Ascending aorta (tissue), 2 donors: ENCODE measurements at regions of chr2 and their contacts with region 1.

Region 1: GRCh38 chr2:219206442-219207253 is at the start of gene ZFAND2B:
- DNase-seq: peak; percentile 83 to 97
- H3K4me3 ChIP-seq: peak within 1 kb of the TSS; percentile 86 to 90
- H3K27ac ChIP-seq: peak within 1 kb of the TSS; percentile 91 to 99
- H3K4me1 ChIP-seq: peaks cover 0 to 6% of the 10 kb centered on the region in 2 donors
- H3K27me3 ChIP-seq: no peaks in the 10 kb centered on the region
- CTCF ChIP-seq: peak; percentile 9 to 34 (median 17)
- total RNA-seq, gene ZFAND2B: 225 TPM

Region 2: DNA sequence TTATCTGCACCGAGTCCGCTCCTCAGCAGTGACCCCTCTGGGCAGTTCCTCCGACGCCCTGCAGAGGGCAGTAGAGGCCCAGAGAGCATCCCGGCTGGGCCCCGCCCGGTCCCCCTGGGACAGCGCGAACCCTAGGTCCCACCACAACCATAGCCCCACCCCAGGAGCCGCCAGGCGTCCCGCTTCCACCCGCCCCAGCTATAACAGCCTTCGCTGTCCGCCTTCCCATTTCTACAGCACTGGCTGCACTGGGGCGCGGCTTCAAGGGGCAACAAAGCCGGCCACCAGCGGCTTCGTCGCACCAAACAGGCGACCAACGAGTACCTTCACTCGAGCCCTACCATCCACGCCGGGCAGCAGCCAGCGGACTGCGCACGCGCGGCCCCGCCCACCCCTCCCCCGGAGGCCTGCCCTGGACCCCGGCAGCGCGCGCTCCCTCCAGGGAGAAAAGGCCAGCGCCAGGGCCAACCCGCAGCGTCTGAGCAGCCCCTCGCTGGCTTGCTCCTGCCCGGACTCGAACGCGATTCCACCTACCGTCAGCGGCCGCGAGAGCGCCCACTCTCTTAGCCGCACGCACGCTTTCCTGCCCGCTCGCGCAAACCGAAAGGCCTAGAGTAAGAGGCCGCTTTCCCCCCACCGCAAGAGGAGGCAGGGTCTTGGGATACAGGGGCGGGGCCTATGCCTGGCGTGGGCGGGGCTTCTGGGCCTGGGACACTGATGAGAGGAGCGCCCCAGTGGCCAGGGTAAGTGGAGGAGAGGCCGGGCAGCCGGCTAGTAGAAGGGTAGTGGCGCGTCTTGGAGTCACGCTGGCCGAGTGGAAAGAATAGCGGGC is 46.2 kb before region 1 on chr2 and contains the start of gene NHEJ1:
- intact Hi-C with region 1: loop called (anchors 1 kb)
- DNase-seq: peak; percentile 88 to 98
- H3K4me3 ChIP-seq: peak within 1 kb of the TSS; percentile 66 to 86
- H3K27ac ChIP-seq: peak within 1 kb of the TSS; percentile 86 to 89
- H3K4me1 ChIP-seq: peaks cover 0 to 8% of the 10 kb centered on the region in 2 donors
- H3K27me3 ChIP-seq: no peaks in the 10 kb centered on the region
- CTCF ChIP-seq: peak; percentile 97 to 100 (median 100)
- total RNA-seq, gene NHEJ1: 21.6 TPM

Region 3: GRCh38 chr2:219177552-219178376 is 28.9 kb before region 1 on chr2 and contains the start of gene RETREG2:
- intact Hi-C with region 1: loop called (anchors 1 kb)
- DNase-seq: peak; percentile 34 to 93
- H3K4me3 ChIP-seq: peak within 1 kb of the TSS; percentile 91 to 99
- H3K27ac ChIP-seq: peak within 1 kb of the TSS; percentile 97 to 98
- H3K4me1 ChIP-seq: peaks cover 4 to 22% of the 10 kb centered on the region in 2 donors
- H3K27me3 ChIP-seq: no peaks in the 10 kb centered on the region
- CTCF ChIP-seq: peak in 2 of 3 experiments; percentile 11 to 19
- total RNA-seq, gene RETREG2: 83.5 TPM

Region 4: DNA sequence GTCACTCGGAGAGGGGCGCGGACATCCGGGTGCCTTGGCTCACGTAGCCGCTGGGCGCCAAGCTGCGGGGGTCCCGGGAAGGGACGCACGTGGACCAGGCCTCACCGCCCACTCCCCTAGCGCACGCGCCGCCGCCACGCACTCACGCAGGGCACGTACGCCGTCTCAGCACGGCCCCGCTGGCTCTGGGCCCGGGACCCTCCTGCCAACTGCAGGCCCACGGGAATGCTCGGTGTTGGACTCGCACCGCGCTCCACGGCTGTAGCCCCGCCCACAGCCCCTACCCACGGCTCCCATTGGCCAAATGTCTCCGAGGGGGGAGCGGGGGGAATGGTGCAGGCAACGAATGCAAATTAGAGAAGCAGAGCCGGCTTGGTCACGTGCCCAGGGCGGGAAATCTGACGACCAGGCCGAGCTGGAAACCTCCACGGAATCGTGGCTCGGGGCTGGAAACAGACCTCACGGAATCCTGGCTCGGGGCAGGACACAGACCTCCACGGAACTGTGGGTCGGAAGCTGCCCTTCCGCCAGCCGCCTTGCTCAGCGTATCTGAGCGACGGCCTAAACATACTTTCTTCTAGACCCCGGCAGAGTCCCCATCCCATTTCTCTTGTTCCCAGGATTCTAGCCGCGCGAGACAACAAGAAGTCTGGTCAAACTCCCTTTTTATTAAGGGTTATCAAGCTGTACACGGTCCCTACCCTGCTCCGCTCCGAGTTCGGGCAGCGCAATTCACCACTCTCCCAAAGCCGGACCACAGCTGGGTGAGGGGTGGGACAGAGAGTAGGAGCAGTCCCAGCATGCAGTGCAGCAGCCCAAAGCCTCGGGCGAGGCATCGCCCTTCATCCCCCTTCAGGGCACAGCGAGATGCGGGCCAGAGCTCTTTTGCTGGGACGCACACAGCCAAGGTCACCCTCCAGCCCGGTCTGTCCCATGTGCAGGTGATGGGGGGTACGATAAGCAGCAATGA is 12.4 kb after region 1 on chr2 and contains the start of gene ABCB6:
- intact Hi-C with region 1: loop called (anchors 1 kb)
- DNase-seq: peak; percentile 93 to 99
- H3K4me3 ChIP-seq: peak within 1 kb of the TSS; percentile 64 to 68
- H3K27ac ChIP-seq: peak within 1 kb of the TSS; percentile 92 to 95
- H3K4me1 ChIP-seq: peaks cover 12 to 31% of the 10 kb centered on the region in 2 donors
- H3K27me3 ChIP-seq: no peaks in the 10 kb centered on the region
- CTCF ChIP-seq: no peak
- total RNA-seq, gene ABCB6: 17.9 TPM

Region 5: GRCh38 chr2:219229305-219230058 is 22.8 kb after region 1 on chr2 and contains the starts of genes ANKZF1 and ATG9A:
- intact Hi-C with region 1: loop called (anchors 1 kb)
- DNase-seq: peak; percentile 98 to 99
- H3K4me3 ChIP-seq: peak within 1 kb of the TSS; percentile 66 to 96
- H3K27ac ChIP-seq: peak within 1 kb of the TSS; percentile 93 to 97
- H3K4me1 ChIP-seq: peaks cover 4 to 23% of the 10 kb centered on the region in 2 donors
- H3K27me3 ChIP-seq: no peaks in the 10 kb centered on the region
- CTCF ChIP-seq: no peak
- total RNA-seq, gene ANKZF1: 53.1 TPM
- total RNA-seq, gene ATG9A: 135 TPM

Region 6: DNA sequence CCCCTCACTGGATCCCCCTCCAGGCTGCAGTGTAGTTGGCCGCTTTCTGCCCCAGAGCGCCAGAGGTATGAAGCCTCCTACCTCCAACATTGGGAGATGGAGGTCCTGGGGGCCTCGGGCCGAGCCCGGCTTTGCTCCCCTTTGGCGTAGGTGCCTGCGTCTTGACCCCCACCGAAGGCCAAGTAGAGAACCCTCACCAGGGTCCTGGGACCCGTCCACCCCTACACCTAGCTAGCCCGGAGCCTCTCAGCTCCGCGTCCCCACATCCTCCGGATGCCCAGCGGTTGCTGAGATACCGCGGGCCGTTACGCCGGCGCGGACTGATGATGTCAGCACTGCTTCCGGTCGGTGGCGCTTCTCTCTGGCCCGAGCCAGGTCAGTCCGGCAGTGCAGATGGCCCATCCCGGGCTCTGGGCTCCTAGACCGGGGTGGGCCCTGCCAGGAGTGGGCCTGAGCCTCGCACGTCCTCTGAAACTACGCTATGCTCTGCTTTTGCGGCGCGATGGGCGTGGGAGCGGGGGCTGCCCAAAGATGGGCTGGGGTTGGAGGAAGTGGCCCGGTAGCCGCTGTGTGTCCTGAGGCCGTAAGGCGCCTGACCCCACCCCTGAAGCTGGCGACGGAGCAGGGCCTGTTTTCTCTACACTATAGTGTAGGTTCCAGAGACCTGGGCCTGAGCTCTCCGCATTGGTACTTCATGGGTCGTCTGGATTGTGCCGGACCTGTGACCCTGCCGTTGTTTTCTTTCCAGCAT is 38.7 kb after region 1 on chr2 and contains the starts of genes GLB1L and STK16:
- intact Hi-C with region 1: loop called (anchors 1 kb)
- DNase-seq: peak; percentile 69 to 97
- H3K4me3 ChIP-seq: peak within 1 kb of the TSS; percentile 82 to 96
- H3K27ac ChIP-seq: peak within 1 kb of the TSS; percentile 96 to 99
- H3K4me1 ChIP-seq: peaks cover 20 to 40% of the 10 kb centered on the region in 2 donors
- H3K27me3 ChIP-seq: no peaks in the 10 kb centered on the region
- CTCF ChIP-seq: no peak
- total RNA-seq, gene GLB1L: 1.8 TPM
- total RNA-seq, gene STK16: 15.2 TPM

Region 7: DNA sequence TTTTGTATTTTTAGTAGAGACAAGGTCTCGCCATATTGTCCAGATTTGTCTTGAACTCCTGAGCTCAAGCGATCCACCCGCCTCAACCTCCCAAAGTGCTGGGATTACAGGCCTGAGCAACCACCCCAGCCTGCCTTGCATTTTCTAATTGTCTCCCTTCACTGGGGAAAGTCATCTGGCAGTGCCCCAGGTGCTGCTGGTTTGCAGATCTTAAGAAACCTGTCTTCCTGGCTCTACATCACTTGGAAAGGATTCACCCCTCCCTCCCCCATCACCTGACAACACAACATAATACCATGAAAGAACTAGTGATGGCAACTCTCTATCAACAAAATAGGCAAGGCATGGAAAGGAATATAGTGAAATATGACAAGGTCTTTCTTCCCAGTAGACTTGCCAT is 48.9 kb after region 1 on chr2:
- intact Hi-C with region 1: no loop called
- DNase-seq: no peak
- H3K4me3 ChIP-seq: no peak overlapping the region
- H3K27ac ChIP-seq: no peak overlapping the region
- H3K4me1 ChIP-seq: peaks cover 4 to 25% of the 10 kb centered on the region in 2 donors
- H3K27me3 ChIP-seq: no peaks in the 10 kb centered on the region
- CTCF ChIP-seq: no peak